Right lobe of liver (tissue), 6 donors: ENCODE measurements at regions of chr19 and their contacts with region 1.

Region 1: DNA sequence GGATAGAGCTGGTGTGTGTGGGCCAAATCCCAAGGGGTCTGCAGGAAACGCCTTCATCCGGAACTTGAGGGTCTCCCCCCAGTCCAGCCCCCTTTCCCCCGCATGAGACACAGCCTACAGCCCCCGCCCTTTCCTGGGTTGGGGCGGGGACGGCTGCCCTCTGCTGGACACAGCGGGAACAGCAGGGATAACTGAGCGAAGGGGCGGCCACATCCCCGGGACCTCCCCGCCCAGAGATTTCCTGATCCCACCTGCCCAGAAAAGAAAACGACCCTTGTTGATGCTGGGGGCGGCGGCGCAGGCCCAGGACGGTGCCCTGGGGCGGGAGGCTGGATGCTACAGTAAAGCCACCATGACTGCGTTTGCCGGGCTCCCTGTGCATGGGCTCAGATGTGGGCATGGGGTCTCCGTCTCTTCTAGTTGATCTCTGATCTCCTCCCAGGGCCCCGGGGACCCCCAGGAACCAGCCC is 14.2 kb downstream of the ONECUT3 start:
- DNase-seq: peak in 2 of 3 donors; percentile 47 to 57
- ATAC-seq: peak; percentile 62 to 84 (median 82)
- H3K4me3 ChIP-seq: no peak overlapping the region
- H3K27ac ChIP-seq: no peak overlapping the region
- H3K4me1 ChIP-seq: no peaks in the 10 kb centered on the region
- H3K27me3 ChIP-seq: peaks cover 0 to 19% of the 10 kb centered on the region in 2 donors
- CTCF ChIP-seq: peak; percentile 84 to 93 (median 88)
- POLR2A ChIP-seq: no peak

Region 2: DNA sequence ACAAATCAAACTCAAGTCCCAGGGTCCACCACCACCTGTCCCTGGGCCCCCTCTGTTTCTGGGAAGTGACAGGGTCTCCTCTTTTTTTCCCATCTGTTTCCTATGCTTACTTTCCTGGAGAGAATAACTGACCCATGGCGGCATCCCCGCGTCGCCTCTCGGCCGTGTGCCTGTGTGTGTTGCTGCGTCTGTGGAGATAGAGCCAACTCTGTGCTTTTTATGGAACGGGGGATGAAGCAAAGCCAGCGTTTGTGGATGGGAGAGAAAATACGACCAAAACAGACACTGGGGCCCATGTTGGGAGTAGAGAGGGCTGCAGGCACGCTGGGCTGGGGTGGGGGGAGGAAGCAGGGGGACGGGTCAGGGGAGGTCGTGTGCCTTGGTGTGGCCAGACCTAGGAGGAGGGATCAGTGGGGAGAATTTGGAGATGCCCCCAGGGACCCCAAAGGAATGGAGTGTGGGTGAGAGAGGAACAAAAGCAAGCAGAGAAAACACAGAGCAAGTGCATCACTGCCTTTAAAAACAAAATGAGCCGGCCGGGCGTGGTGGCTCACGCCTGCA is 227.1 kb before region 1 on chr19:
- intact Hi-C with region 1: loop called in 1 of 2 experiments (anchors 10 kb)
- DNase-seq: no peak
- ATAC-seq: no peak
- H3K4me3 ChIP-seq: no peak overlapping the region
- H3K27ac ChIP-seq: no peak overlapping the region
- H3K4me1 ChIP-seq: no peaks in the 10 kb centered on the region
- H3K27me3 ChIP-seq: no peaks in the 10 kb centered on the region
- CTCF ChIP-seq: no peak
- POLR2A ChIP-seq: no peak

Region 3: GRCh38 chr19:1672038-1672768 is 95.3 kb before region 1 on chr19:
- intact Hi-C with region 1: loop called in 1 of 2 experiments (anchors 5 kb)
- DNase-seq: peak in 2 of 3 donors; percentile 50 to 52
- ATAC-seq: peak; percentile 65 to 80 (median 73)
- H3K4me3 ChIP-seq: no peak overlapping the region
- H3K27ac ChIP-seq: no peak overlapping the region
- H3K4me1 ChIP-seq: peaks cover 0 to 17% (median 2%) of the 10 kb centered on the region in 4 donors
- H3K27me3 ChIP-seq: peaks cover 0 to 9% of the 10 kb centered on the region in 2 donors
- CTCF ChIP-seq: peak; percentile 70 to 73 (median 72)
- POLR2A ChIP-seq: no peak

Region 4: GRCh38 chr19:1685046-1685445 is 82.5 kb before region 1 on chr19:
- intact Hi-C with region 1: loop called in 1 of 2 experiments (anchors 5 kb)
- DNase-seq: no peak
- ATAC-seq: no peak
- H3K4me3 ChIP-seq: no peak overlapping the region
- H3K27ac ChIP-seq: no peak overlapping the region
- H3K4me1 ChIP-seq: no peaks in the 10 kb centered on the region
- H3K27me3 ChIP-seq: no peaks in the 10 kb centered on the region
- CTCF ChIP-seq: no peak
- POLR2A ChIP-seq: no peak

Region 5: DNA sequence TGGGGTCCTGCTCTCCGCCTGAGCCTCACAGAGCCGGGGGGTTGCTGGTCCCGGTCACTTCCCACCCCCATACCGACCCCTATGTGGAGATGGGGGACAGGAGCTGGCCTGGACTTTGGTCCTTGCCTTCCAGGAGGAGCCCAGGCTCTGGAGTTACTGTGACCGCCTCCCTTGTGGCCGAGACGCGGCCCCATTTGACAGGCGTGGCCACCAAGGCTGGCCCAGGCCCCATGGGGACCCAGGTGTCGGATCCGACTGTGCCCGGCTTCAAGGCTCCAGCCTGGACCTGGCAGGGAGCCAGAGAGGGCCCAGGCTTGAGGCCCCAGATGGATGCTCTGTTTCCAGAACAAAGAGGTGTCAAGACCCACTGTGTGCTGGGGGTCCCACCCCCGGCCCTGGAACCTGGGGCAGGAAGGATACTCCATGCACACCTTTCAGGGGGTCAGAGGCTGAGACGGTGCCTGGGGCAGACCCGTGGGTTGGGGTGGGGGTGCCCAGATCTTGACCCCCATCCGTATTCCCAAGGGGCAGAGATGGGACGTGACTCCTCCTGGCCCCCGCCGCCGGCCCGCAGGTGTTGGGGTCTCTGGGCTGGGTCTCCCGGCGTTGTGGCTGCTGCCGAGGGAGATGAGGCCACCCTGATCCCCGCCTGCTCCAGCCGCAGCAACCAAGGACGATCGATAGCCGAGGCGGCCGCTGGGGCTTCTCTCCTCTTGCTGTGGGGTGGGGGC is 67.3 kb before region 1 on chr19:
- intact Hi-C with region 1: no loop called
- DNase-seq: no peak
- ATAC-seq: peak in 2 of 4 donors; percentile 11 to 31
- H3K4me3 ChIP-seq: no peak overlapping the region
- H3K27ac ChIP-seq: no peak overlapping the region
- H3K4me1 ChIP-seq: no peaks in the 10 kb centered on the region
- H3K27me3 ChIP-seq: no peaks in the 10 kb centered on the region
- CTCF ChIP-seq: no peak
- POLR2A ChIP-seq: no peak

Region 6: DNA sequence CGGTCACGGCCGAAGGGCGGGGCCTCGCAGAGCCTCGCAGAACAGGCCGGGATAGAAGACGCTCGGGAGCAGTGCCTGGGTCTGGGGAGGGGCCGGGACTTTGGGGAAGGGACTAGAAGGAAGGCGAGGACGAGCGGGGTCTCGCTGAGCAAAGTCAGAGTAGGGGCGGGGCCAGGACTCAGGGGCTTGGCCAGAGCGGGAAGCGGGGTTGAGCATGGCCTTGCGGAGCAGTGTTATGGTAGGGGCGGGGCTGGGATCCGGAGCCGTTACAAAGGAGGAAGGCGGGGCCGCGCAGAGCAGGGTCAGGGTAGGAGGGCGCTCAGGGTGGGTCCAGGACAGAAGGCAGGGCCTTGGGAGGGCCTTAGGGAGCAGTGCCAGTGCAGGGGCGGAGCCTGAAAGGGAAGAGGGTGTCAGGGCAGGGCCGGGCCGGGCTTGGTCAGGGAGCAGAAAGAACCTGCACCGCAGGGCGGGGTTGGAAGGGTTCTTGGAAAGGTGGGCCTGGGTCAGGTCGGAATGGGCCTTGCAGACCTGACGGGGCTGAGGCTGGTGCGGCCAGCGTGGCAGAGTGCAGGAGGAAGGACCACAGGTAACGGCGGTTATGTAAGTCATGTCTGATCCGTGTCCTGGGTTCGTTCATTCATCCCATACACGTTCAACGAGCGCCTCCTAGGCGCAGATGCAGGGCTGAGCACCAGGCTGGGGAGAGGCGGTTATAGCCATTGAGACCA is 45.1 kb after region 1 on chr19:
- intact Hi-C with region 1: no loop called
- DNase-seq: peak; percentile 98
- ATAC-seq: peak; percentile 86 to 92 (median 88)
- H3K4me3 ChIP-seq: peak overlapping the region; percentile 35 to 54 (median 42)
- H3K27ac ChIP-seq: peak overlapping the region in 2 of 3 donors; percentile 18 to 43
- H3K4me1 ChIP-seq: peaks cover 0 to 6% (median 0%) of the 10 kb centered on the region in 4 donors
- H3K27me3 ChIP-seq: no peaks in the 10 kb centered on the region
- CTCF ChIP-seq: peak; percentile 47 to 65 (median 50)
- POLR2A ChIP-seq: peak; percentile 44